Right ventricle myocardium inferior (tissue), 1 donor: ENCODE measurements at regions of chr11 and their contacts with region 1.

Region 1: GRCh38 chr11:3341298-3341697 is 37.6 kb downstream of the ZNF195 start:
- DNase-seq: no peak
- ATAC-seq: no peak

Region 2: DNA sequence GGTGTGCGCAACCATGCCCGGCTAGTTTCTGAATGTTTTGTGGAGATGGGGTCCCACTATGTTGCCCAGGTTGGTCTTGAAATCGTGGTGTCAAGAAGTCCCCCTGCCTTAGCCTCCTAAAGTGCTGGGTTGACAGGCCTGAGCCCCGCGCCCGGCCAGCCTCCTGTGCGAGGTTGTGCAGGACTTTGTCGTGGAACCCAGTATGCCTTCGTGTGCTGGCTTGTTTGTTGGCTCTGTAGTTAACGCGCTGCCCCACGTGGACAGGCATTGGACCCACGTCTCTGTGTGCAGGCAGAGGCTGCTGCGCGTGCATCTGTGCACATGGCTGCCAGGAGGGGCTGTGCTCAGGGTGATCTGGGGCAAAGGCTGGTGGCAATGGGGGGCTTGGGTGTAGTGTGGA is 71.5 kb after region 1 on chr11:
- intact Hi-C with region 1: loop called (anchors 10 kb)
- DNase-seq: no peak
- ATAC-seq: no peak

Region 3: DNA sequence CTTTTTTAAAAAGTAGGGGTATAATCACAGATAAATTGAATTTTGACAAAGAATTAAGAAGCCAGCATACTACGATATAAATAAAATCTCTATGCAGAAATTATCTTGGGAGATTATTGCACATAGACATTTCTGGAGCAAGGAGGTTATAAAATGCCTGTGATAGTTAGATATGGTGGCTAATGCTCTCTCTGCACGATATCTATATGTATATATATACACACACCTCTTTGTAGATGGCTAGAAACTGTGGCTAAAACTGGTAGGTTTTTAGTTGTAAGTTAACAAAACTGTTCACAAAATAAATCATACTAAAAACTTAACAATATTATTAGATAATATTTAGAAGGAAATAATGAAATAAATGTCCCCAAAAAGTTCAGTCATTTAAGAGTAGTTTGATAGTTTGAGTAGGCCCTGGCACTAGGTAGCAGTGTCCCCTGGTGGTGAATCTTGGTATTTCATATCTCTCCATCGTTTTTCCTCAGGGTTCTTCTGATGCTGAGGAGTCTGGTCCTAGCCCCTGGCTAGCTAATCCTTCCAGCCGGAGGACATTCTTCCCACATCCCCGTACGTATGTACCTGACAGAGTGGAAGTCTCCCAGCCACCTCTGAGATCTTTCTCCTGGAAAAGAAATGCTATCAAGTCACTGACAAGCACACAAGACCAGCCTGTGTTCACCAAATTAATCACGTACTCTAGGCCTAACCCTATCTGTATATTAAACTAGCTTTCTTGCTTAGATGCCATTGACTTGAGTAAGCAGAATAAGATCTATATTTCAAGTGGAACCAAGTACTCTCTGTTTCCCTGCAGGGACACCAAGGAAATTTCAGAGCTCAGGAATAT is 268.3 kb after region 1 on chr11:
- intact Hi-C with region 1: no loop called
- DNase-seq: no peak
- ATAC-seq: no peak